Mammary epithelial cell (primary cell): ENCODE measurements at regions of chr14 and their contacts with region 1.

Region 1: DNA sequence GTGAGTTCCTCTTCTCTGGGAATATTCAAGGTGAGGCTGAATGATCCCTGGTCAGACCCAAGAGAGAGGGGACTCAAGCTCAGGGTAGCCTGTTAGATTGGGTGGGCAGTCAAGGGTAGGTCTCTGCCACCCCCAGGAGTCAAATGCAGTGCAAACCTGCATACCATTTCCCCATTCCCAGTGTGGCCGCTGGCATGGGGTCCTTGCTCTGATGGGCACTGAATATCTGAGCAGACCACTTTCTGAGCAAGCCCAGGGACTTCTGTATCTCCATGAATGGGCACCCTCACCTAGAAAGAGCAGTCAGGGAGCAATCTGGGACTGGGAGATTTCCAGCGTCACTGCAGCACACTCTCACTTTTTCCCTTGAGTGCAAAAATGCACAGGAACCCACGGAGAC is 573.7 kb downstream of the BCL11B start:
- DNase-seq: no peak
- H3K4me3 ChIP-seq: no peak overlapping the region
- H3K27ac ChIP-seq: no peak overlapping the region
- H3K4me1 ChIP-seq: no peaks in the 10 kb centered on the region
- H3K27me3 ChIP-seq: no peaks in the 10 kb centered on the region
- CTCF ChIP-seq: no peak

Region 2: DNA sequence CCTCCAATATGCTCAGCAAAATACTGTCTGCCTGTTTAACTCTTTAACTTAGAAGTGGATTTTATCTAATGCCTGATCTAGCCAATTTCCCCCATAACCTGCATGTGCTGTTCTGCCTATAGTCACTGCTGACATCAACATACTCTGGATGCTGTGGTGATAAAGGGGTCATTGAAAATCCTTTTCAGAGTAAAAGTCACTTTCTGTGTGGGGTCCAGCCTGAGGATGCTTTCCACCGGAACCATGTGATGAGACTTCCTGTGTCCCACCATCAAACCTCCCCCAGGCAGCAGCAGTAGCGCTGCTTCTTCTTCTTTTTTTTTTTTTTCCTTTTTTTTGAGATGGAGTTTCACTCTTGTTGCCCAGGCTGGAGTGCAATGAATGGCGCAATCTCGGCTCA is 33.3 kb before region 1 on chr14:
- CTCF ChIA-PET with region 1: no interaction called
- dilution Hi-C with region 1: no loop called
- in situ Hi-C with region 1: no loop called
- intact Hi-C with region 1: loop called (anchors 1 kb)
- DNase-seq: no peak
- H3K4me3 ChIP-seq: no peak overlapping the region
- H3K27ac ChIP-seq: no peak overlapping the region
- H3K4me1 ChIP-seq: no peaks in the 10 kb centered on the region
- H3K27me3 ChIP-seq: peaks cover 6% of the 10 kb centered on the region
- CTCF ChIP-seq: no peak

Region 3: DNA sequence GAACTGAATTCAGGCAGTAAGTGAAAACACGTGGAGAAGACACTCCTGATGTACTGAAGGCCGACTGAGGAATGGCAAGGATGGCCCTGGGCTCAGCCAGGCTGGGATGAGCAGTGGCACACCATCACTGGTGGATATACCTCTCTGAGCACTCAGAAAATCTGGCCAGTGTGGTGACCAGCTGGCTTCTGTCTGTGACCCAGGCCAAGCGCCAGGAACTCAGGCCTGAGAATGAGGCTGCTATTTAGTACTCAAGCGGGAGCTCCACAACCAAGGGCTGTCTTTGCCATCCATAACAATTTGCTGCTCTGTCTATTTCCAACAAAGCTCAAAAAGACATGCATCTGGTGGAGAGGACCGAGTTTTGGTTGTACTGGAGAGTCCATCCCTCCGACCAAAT is 12.6 kb before region 1 on chr14:
- CTCF ChIA-PET with region 1: no interaction called
- dilution Hi-C with region 1: no loop called
- in situ Hi-C with region 1: no loop called
- intact Hi-C with region 1: no loop called
- DNase-seq: no peak
- H3K4me3 ChIP-seq: no peak overlapping the region
- H3K27ac ChIP-seq: no peak overlapping the region
- H3K4me1 ChIP-seq: no peaks in the 10 kb centered on the region
- H3K27me3 ChIP-seq: no peaks in the 10 kb centered on the region
- CTCF ChIP-seq: no peak